Breast epithelium (tissue), 4 donors: ENCODE measurements at regions of chr1 and their contacts with region 1.

Region 1: GRCh38 chr1:21579791-21580190 is 70.6 kb downstream of the ALPL start:
- DNase-seq: no peak
- H3K4me3 ChIP-seq: no peak overlapping the region
- H3K27ac ChIP-seq: no peak overlapping the region
- H3K4me1 ChIP-seq: peaks cover 0 to 1% of the 10 kb centered on the region in 2 donors
- H3K27me3 ChIP-seq: no peaks in the 10 kb centered on the region
- CTCF ChIP-seq: no peak
- POLR2A ChIP-seq: no peak

Region 2: GRCh38 chr1:21503706-21504377 is 75.9 kb before region 1 on chr1:
- intact Hi-C with region 1: no loop called
- DNase-seq: peak; percentile 17 to 79
- H3K4me3 ChIP-seq: no peak overlapping the region
- H3K27ac ChIP-seq: peak overlapping the region; percentile 8 to 32
- H3K4me1 ChIP-seq: peaks cover 0 to 4% of the 10 kb centered on the region in 2 donors
- H3K27me3 ChIP-seq: peaks cover 0 to 4% of the 10 kb centered on the region in 2 donors
- CTCF ChIP-seq: no peak
- POLR2A ChIP-seq: no peak

Region 3: GRCh38 chr1:21568809-21569385 is 10.9 kb before region 1 on chr1:
- intact Hi-C with region 1: loop called (anchors 1 kb)
- DNase-seq: no peak
- H3K4me3 ChIP-seq: no peak overlapping the region
- H3K27ac ChIP-seq: peak overlapping the region in 1 of 2 donors; percentile 9
- H3K4me1 ChIP-seq: no peaks in the 10 kb centered on the region
- H3K27me3 ChIP-seq: no peaks in the 10 kb centered on the region
- CTCF ChIP-seq: no peak
- POLR2A ChIP-seq: no peak